ENCODE measurements at regions of chr12 and their contacts with region 1.

Region 1: DNA sequence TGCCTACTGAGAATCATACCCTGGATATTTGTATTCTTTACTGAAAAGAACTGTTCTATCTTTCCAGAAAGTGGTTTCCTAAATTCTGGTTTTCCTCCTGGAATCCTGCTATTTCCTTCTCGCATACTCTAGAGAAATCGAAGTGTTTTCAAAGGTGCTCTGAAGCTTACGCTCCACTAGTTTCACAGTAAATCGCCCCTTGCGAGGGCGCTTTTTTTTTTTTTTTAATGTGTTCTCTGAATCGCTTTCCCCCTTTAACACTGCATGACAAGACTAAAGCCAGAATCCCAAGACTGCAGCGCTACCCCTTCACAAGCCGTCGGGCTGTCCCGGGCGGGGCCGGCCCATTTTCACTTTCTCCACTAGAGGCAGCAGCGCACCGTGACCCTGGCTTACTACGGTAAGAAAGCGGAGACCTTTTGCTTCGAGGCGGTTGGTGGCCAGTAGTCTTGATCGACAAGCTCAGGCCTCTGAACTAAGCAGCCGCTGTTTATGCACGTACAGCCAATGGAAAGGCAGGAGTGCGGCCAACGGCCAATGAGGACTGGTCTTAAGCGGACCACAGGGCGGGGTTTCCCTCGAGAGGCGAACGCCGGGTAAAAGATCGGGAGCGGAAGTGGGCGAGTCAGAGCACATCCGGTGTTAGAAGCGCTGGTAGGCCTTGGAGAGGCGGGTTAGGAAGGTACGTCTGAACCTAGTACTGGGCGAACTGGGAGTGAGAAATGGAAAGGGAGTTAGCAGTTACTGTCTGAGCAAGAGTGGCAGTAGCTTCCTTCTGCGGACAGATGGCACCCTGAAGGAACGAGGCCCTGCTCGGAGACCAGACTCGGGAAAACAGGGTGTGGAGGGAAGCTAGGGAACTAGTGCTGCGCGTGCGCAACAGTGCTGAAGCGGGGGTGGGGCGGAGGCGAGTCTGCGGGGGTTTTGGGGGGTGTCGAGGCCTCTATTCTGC is at the start of gene TMBIM6:
- DNase-seq: peak; percentile 100
- H3K4me3 Mint-ChIP-seq: peak within 1 kb of the TSS; percentile 99
- H3K27ac Mint-ChIP-seq: peak within 1 kb of the TSS; percentile 100
- H3K4me1 Mint-ChIP-seq: peaks cover 39% of the 10 kb centered on the region
- H3K27me3 Mint-ChIP-seq: no peaks in the 10 kb centered on the region
- total RNA-seq, gene TMBIM6: 481 to 486 TPM

Region 2: DNA sequence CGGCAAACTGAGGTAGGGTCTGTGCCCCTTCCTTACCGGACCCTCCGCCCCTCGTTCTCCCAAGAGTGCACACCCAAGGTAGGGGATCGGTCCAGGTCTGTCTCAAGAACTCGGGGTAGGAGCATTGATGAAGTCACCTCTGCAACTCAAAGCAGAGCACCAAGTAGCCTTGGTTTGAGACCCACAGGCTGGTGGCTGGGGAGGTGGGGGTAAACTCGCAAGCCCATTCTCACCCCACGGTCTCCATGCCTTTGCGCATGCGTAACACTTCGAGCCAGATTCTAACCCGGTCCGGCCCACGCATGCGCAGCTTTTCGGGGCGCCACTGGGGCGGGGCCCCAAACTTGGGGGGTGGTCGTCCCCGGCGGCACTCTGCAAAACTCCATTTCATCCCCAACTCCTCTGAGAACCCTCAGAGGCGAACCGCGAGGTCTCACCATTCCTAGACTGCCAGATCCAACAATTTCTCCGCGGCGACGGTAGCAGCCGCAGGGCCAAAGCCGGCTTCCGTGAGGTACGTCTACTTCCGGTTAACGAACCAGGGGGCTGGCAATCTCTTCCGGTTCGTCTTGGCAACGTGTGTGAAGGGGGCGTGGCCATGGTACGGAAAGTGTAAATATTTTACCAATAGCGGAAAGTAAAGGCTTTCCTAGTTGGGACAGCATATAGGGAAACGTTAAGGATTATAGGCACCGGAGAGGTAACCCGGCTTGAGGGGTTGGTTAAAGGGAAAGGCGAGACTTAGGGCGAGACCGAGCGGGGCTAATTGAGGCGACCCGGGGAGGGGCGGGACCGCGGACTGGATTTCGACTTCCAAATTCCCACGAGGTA is 173.4 kb before region 1 on chr12 and contains the start of gene MCRS1:
- CTCF ChIA-PET with region 1: no interaction called
- POLR2A ChIA-PET with region 1: interaction called, 3 read pairs
- intact Hi-C with region 1: loop called (anchors 1 kb)
- DNase-seq: peak; percentile 90
- H3K4me3 Mint-ChIP-seq: peak within 1 kb of the TSS; percentile 98
- H3K27ac Mint-ChIP-seq: peak within 1 kb of the TSS; percentile 96
- H3K4me1 Mint-ChIP-seq: peaks cover 47% of the 10 kb centered on the region
- H3K27me3 Mint-ChIP-seq: no peaks in the 10 kb centered on the region
- total RNA-seq, gene MCRS1: 52.3 to 56.8 TPM

Region 3: DNA sequence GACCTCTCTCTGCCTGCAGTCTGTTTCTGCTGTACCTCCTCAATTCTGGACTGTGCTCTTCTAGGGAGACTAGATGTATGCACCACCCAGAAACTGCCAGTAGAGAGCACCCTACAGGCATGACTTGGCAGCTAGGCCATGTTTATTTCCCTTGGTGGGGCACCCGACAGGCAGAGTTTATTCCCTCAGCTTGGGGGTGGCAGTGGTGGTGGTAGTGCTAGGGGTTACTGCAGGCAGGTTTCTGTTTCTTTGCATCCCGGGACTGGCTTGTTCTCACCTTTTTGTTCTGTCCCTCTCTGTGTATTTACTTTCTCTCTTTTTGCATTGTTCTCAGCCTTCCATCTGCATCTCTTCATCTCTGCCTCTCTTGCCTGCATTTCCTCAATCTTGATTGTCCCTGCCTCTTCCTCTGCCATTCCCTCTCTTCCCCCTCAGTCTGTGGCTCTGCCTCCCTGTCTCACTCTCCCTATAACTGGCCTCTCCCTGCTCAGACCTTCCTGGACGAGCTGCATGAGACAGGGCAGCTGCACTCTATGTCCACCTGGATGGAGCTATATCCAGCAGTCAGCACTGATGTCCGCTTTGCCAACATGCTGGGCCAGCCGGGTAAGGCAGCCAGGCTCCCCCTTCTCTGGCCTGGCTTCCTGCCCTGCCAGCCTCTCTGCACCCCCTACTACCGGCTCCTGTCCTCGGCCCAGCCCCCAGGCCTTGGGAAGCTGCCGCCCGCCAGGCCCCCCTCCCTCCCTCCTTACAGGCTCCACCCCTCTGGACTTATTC is 104.0 kb before region 1 on chr12:
- CTCF ChIA-PET with region 1: interaction called, 10 read pairs
- POLR2A ChIA-PET with region 1: interaction called, 4 read pairs
- intact Hi-C with region 1: no loop called
- DNase-seq: peak; percentile 70
- H3K4me3 Mint-ChIP-seq: no peak overlapping the region
- H3K27ac Mint-ChIP-seq: peak overlapping the region; percentile 7
- H3K4me1 Mint-ChIP-seq: peaks cover 6% of the 10 kb centered on the region
- H3K27me3 Mint-ChIP-seq: no peaks in the 10 kb centered on the region

Region 4: DNA sequence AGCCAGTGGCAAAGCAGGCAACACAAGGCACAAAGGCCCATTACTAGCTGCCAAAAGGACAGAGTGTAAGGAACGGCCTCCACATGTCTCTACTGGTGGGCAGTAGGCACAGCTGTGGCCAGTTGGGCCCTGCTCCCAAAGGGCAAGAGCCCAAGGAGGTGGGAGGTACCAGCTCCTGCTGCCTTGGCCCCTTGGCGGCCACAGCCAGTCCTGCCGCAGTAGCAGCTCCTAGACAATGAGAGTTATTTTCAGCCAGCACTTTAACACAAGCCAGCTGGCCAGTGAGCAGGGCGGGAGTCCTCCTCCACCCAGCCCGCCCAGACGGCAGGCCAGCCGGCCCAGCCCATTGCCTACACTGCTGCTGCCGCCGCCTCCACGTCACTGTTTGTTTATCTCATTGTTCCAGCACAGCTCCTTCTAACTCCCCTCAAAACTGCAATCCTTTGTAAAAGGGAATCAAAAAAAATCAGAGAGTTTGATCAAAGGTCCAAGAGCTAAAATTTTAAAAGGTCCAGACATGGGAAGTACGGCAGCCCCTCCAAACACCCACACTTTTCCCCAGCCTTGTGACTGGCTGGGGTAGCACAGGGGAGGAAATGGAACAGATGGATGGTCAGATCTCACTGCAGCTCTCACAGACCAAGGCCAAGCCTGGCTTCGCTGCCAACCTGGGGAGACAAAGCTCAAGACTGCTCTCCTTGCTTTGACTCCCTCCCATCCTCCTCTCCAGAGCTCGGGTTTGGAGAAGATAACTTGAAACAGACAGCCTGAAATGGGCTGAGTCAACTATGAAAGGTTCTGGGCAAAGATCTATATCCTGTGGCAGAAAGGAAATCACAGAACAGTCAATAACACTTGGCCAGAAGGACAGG is 67.5 kb before region 1 on chr12:
- CTCF ChIA-PET with region 1: interaction called, 8 read pairs
- POLR2A ChIA-PET with region 1: interaction called, 11 read pairs
- intact Hi-C with region 1: loop called (anchors 5 kb)
- DNase-seq: peak; percentile 16
- H3K4me3 Mint-ChIP-seq: peak overlapping the region; percentile 2
- H3K27ac Mint-ChIP-seq: peak overlapping the region; percentile 94
- H3K4me1 Mint-ChIP-seq: peaks cover 75% of the 10 kb centered on the region
- H3K27me3 Mint-ChIP-seq: no peaks in the 10 kb centered on the region

Region 5: GRCh38 chr12:49763006-49763591 is 21.9 kb after region 1 on chr12:
- CTCF ChIA-PET with region 1: interaction called, 136 read pairs
- POLR2A ChIA-PET with region 1: interaction called, 27 read pairs
- intact Hi-C with region 1: loop called (anchors 1 kb)
- DNase-seq: peak; percentile 89
- H3K4me3 Mint-ChIP-seq: peak overlapping the region; percentile 49
- H3K27ac Mint-ChIP-seq: peak overlapping the region; percentile 95
- H3K4me1 Mint-ChIP-seq: peaks cover 59% of the 10 kb centered on the region
- H3K27me3 Mint-ChIP-seq: no peaks in the 10 kb centered on the region

Region 6: DNA sequence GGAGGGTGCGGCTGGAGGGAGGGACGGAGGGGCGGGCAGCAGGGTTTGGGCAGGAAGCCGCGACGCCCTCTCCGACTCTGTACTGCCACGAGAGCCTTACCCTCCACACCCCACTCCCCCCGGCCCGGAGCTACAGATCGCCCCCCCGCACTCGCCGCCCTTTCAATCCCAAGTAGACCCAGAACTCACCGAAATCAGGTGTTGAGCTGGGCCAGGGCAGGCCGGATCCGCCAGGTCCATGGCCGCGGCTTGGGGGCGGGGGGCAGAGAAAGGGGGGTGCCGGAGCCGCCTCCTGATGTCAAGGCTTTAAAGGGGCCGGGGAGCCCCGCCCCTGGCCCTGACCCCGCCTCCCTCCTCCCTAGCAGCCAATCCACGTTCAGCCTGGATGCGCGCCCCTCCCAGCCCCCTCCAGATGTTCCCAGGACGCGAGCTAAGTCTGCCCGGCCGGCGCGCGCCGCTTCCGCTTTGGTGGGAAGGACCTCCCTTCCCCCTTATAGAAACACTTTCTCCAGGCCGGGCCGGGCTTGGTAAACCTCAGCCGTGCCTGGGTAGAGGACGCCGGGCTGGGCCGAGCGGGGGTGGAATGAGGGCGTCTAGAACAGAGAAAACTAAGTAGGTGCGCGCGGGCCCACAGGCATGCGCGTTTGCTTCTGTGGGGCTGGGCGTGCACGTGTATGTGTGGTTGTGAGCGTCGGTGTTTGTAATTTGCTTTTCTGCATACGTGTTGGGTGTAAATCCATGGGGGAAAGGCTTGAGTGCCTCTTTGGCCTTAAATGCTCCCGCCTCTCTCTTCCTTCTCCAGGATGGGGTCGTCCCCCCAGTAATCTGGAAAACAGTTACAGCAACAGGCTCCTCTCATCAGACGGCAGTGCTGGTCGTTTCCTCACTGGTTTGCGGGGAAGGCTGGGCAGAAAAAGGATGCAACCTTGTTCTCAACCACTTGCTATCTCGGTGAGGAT is 87.2 kb after region 1 on chr12 and contains the start of gene NCKAP5L:
- CTCF ChIA-PET with region 1: interaction called, 4 read pairs
- POLR2A ChIA-PET with region 1: interaction called, 4 read pairs
- intact Hi-C with region 1: loop called (anchors 1 kb)
- DNase-seq: peak; percentile 96
- H3K4me3 Mint-ChIP-seq: peak within 1 kb of the TSS; percentile 93
- H3K27ac Mint-ChIP-seq: peak within 1 kb of the TSS; percentile 88
- H3K4me1 Mint-ChIP-seq: peaks cover 20% of the 10 kb centered on the region
- H3K27me3 Mint-ChIP-seq: no peaks in the 10 kb centered on the region
- total RNA-seq, gene NCKAP5L: 2.9 to 3.0 TPM

Measured in activated CD4-positive, alpha-beta memory T cell treated with anti-CD3 and anti-CD28 coated beads for 36 hours (primary cell).